AG04449 (cell line): ENCODE measurements at regions of chr22 and their contacts with region 1.

Region 1: GRCh38 chr22:40950962-40951794 is at the start of gene RBX1:
- DNase-seq: peak; percentile 91
- H3K4me3 ChIP-seq: peak within 1 kb of the TSS; percentile 92
- CTCF ChIP-seq: no peak

Region 2: GRCh38 chr22:40966726-40967085 is 15.5 kb after region 1 on chr22:
- CTCF ChIA-PET with region 1: no interaction called
- POLR2A ChIA-PET with region 1: no interaction called
- DNase-seq: no peak
- H3K4me3 ChIP-seq: no peak overlapping the region
- CTCF ChIP-seq: no peak

Region 3: GRCh38 chr22:41091132-41092022 is 140.2 kb after region 1 on chr22:
- CTCF ChIA-PET with region 1: interaction called, 5 read pairs
- POLR2A ChIA-PET with region 1: interaction called, 18 read pairs
- DNase-seq: peak; percentile 88
- H3K4me3 ChIP-seq: peak overlapping the region; percentile 83
- CTCF ChIP-seq: no peak